HepG2 (cell line): ENCODE measurements at regions of chr3 and their contacts with region 1.

Region 1: GRCh38 chr3:128680602-128681368 is 30.2 kb upstream of the RPN1 start:
- DNase-seq: peak; percentile 95
- ATAC-seq: peak; percentile 98
- H3K4me3 ChIP-seq: peak overlapping the region; percentile 67 to 88 (median 69)
- H3K27ac ChIP-seq: peak overlapping the region; percentile 93
- H3K4me1 ChIP-seq: peaks cover 19% of the 10 kb centered on the region
- H3K27me3 ChIP-seq: no peaks in the 10 kb centered on the region
- CTCF ChIP-seq: peak; percentile 100
- EP300 ChIP-seq: 0 out of 4 replicates have a peak, but pooled peaks of 1 of the 2 experiments have one; percentile 32
- POLR2A ChIP-seq: peak; percentile 82 to 97
- RAD21 ChIP-seq: peak; percentile 95

Region 2: GRCh38 chr3:128650096-128651050 is 30.4 kb before region 1 on chr3 and contains the start of gene RPN1:
- CTCF ChIA-PET with region 1: no interaction called
- POLR2A ChIA-PET with region 1: interaction called, 25 read pairs
- in situ Hi-C with region 1: no loop called
- intact Hi-C with region 1: loop called (anchors 2 kb)
- DNase-seq: peak; percentile 86
- ATAC-seq: peak; percentile 97
- H3K4me3 ChIP-seq: peak within 1 kb of the TSS; percentile 88 to 99 (median 96)
- H3K27ac ChIP-seq: peak within 1 kb of the TSS; percentile 99
- H3K4me1 ChIP-seq: peaks cover 42% of the 10 kb centered on the region
- H3K27me3 ChIP-seq: no peaks in the 10 kb centered on the region; a peak in 1 of 5 replicates
- CTCF ChIP-seq: peak; percentile 12; the same call in 1 of the 2 replicates
- EP300 ChIP-seq: no peak; a peak in 1 of 4 replicates
- POLR2A ChIP-seq: peak; percentile 84 to 91
- RAD21 ChIP-seq: peak; percentile 44; the same call in 1 of the 2 replicates
- total RNA-seq, gene RPN1: 158 and 342 TPM in 2 replicates

Region 3: DNA sequence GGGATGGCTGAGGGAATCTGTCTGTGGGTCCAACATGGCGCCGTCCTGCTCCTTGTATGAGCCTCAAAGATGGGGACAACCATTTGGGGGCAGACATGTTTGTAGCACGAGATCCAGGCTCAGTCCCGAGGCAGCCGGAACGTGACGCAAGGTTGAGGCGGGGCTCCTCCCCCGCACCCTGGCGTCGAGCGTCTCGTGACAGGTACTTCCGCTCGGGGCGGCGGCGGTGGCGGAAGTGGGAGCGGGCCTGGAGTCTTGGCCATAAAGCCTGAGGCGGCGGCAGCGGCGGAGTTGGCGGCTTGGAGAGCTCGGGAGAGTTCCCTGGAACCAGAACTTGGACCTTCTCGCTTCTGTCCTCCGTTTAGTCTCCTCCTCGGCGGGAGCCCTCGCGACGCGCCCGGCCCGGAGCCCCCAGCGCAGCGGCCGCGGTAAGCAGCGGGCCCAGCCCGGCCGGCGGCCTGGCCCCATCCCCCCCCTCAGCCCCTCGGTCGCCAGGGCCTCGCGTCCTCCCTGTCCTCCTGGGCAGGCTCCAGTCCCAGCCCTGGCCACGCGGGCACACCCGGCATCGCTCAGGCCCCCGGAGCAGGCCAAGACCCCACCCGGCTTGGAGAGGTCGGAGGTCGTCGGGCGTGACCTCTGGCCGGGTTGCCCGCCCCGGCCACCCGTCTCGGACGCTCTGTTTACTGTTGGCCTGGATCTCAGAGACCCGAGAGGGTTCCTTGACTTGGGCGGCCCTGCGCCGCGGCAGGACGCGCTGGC is 45.3 kb after region 1 on chr3 and contains the start of gene RAB7A:
- CTCF ChIA-PET with region 1: no interaction called
- POLR2A ChIA-PET with region 1: interaction called, 15 read pairs
- in situ Hi-C with region 1: no loop called
- intact Hi-C with region 1: loop called (anchors 5 kb)
- DNase-seq: peak; percentile 94
- ATAC-seq: peak; percentile 96
- H3K4me3 ChIP-seq: peak within 1 kb of the TSS; percentile 83 to 93 (median 92)
- H3K27ac ChIP-seq: peak within 1 kb of the TSS; percentile 84
- H3K4me1 ChIP-seq: peaks cover 53% of the 10 kb centered on the region
- H3K27me3 ChIP-seq: peaks cover 0 to 5% of the 10 kb centered on the region in 2 experiments; a peak in 1 of 5 replicates
- CTCF ChIP-seq: 0 out of 2 replicates have a peak, but pooled peaks have one; percentile 10
- EP300 ChIP-seq: no peak
- POLR2A ChIP-seq: peak; percentile 88 to 96
- RAD21 ChIP-seq: peak; percentile 32; the same call in 1 of the 2 replicates
- total RNA-seq, gene RAB7A: 26.5 and 49.0 TPM in 2 replicates

Region 4: GRCh38 chr3:128804017-128804810 is 123.4 kb after region 1 on chr3:
- CTCF ChIA-PET with region 1: no interaction called
- POLR2A ChIA-PET with region 1: no interaction called
- in situ Hi-C with region 1: loop called (anchors 10 kb)
- intact Hi-C with region 1: no loop called
- DNase-seq: no peak
- ATAC-seq: no peak
- H3K4me3 ChIP-seq: no peak overlapping the region
- H3K27ac ChIP-seq: no peak overlapping the region
- H3K4me1 ChIP-seq: no peaks in the 10 kb centered on the region
- H3K27me3 ChIP-seq: no peaks in the 10 kb centered on the region
- CTCF ChIP-seq: no peak
- EP300 ChIP-seq: no peak
- POLR2A ChIP-seq: no peak
- RAD21 ChIP-seq: no peak